Activated CD8-positive, alpha-beta T cell treated with anti-CD3 and anti-CD28 coated beads, Interleukin-2, amount 10 ng/mL, durations not matched to agents 7 days and 5 days (primary cell): ENCODE measurements at regions of chr10 and their contacts with region 1.

Region 1: GRCh38 chr10:79195091-79195923 is 126.5 kb downstream of the ZMIZ1 start:
- DNase-seq: peak; percentile 85
- ATAC-seq: peak; percentile 91
- H3K4me3 Mint-ChIP-seq: no peak overlapping the region
- H3K27ac Mint-ChIP-seq: no peak overlapping the region
- H3K4me1 Mint-ChIP-seq: no peaks in the 10 kb centered on the region
- H3K27me3 Mint-ChIP-seq: no peaks in the 10 kb centered on the region

Region 2: DNA sequence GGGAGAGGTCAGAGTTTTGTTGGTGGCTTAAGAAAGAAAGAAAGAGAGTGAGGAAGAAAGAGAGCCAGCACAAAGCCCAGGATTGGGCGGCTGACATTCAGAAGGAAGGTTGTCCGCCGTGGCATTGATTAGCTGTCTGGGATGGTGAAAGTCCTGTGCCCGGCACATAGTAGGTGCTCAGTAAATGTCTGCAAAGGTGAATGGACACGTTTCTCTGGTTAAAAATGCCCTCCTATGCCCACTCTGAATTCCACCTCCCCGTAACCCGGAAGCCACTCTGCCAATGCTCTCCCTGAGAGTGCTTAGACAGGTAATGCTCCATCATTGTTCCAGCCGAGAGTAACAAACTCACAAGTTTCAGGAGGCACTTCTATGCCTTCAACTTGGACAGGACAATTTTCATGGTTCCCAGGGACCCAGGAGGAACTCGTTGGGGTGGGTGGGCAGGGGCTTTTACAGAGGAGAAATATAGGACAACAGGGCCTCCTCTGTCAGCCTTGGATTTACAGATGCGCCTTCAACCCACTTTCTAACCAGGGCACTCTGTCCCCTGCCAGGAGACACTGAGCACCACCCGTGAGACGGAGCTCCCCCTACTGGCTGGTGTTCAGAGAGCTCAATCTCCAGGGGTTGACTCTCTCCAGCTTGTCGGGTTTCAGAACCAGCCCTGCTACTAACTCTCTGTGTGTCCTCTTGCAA is 538.0 kb before region 1 on chr10:
- CTCF ChIA-PET with region 1: interaction called, 14 read pairs
- POLR2A ChIA-PET with region 1: no interaction called
- DNase-seq: peak; percentile 81
- ATAC-seq: peak; percentile 82
- H3K4me3 Mint-ChIP-seq: no peak overlapping the region
- H3K27ac Mint-ChIP-seq: no peak overlapping the region
- H3K4me1 Mint-ChIP-seq: no peaks in the 10 kb centered on the region
- H3K27me3 Mint-ChIP-seq: peaks cover 12% of the 10 kb centered on the region

Region 3: DNA sequence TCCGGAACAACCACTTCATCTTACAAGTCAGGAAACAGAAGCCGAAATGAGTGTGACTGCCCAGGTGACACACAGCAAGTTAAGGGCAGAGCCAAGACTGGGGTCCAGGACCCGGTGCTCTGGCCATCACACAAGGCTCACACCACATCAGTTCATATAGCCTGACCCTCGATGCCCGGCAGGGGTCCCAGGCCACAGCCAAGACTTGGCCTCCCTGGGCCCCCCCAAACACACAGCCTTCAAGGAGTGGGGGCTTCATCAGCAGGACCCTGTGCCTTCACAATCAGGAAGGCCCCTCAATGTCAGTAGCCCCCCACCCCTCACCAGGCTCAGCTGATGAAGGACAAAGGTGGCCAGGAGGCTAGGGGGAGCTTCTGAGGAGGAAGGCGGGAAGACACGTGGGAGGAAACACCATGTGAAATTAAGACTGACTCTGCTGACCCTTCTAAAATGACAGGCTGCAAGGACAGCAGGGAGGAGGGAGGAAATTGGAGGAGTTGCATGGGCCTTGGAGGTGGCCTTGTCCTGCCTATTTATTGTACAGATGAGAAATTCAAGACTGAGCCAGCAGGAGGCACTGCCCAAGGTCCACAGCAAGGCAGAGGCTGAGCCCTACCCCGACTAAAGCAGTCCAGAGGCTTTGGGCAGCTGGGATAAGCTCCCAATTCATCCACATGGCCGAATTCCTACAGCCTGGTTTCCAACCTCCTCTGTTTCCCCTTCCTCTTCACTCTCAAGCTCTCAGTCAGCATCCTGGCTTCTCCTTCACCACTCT is 342.7 kb before region 1 on chr10:
- CTCF ChIA-PET with region 1: interaction called, 23 read pairs
- POLR2A ChIA-PET with region 1: no interaction called
- DNase-seq: peak; percentile 33
- ATAC-seq: no peak
- H3K4me3 Mint-ChIP-seq: no peak overlapping the region
- H3K27ac Mint-ChIP-seq: no peak overlapping the region
- H3K4me1 Mint-ChIP-seq: no peaks in the 10 kb centered on the region
- H3K27me3 Mint-ChIP-seq: no peaks in the 10 kb centered on the region

Region 4: GRCh38 chr10:79067241-79068202 is 127.8 kb before region 1 on chr10:
- CTCF ChIA-PET with region 1: interaction called, 17 read pairs
- POLR2A ChIA-PET with region 1: interaction called, 3 read pairs
- DNase-seq: peak; percentile 84
- ATAC-seq: peak; percentile 24
- H3K4me3 Mint-ChIP-seq: peak overlapping the region; percentile 79
- H3K27ac Mint-ChIP-seq: peak overlapping the region; percentile 4
- H3K4me1 Mint-ChIP-seq: peaks cover 56% of the 10 kb centered on the region
- H3K27me3 Mint-ChIP-seq: peaks cover 14% of the 10 kb centered on the region

Region 5: DNA sequence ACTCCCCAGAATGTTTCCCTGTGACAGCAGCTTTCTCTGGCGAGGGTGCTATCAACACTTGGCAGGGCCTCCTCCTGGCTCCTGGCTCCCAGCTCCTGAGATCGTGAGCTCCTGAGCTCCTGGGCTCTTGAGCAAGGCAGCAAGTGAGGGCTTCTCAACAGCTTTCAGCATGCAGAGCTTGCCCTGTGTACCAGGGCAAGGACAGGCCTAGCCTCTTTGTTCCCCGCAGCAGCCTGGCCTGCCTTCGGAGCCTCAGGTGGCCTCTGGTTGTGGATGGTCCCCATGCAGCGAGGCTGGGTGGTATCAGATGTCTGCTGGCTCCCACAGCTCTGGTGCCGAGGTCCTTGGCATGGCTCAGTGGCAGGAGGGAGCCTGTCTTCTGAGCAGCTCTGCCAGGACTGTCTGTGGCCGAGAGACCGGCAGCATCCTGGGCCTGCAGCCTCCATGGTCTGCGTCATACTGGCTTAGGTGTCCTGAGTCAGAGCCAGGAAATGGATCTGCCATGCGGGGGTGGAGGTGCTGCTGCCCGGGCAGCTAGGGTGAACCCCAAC is 82.4 kb before region 1 on chr10:
- CTCF ChIA-PET with region 1: interaction called, 11 read pairs
- POLR2A ChIA-PET with region 1: no interaction called
- DNase-seq: no peak
- ATAC-seq: no peak
- H3K4me3 Mint-ChIP-seq: no peak overlapping the region
- H3K27ac Mint-ChIP-seq: no peak overlapping the region
- H3K4me1 Mint-ChIP-seq: peaks cover 26% of the 10 kb centered on the region
- H3K27me3 Mint-ChIP-seq: no peaks in the 10 kb centered on the region

Region 6: DNA sequence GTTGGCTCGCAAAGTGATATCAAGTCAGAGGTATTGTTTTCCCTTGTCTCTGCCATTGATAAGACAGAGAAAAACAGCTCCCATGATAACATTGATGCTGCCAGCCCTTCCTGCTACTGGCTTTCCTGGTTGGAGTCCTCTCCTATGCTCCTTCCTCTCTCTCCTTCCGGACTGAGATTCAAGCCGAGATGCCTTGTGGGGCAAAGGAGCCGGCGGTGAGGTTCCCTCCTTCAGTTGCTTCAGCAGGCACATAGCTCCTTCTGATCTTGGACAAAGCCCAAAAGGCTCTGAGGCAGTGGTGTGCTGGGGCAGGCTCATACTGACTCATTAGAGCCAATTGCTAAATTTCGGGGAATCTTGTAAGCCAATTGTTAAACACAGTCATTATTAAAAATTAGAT is 259.0 kb after region 1 on chr10:
- CTCF ChIA-PET with region 1: no interaction called
- POLR2A ChIA-PET with region 1: no interaction called
- DNase-seq: no peak
- ATAC-seq: no peak
- H3K4me3 Mint-ChIP-seq: no peak overlapping the region
- H3K27ac Mint-ChIP-seq: no peak overlapping the region
- H3K4me1 Mint-ChIP-seq: no peaks in the 10 kb centered on the region
- H3K27me3 Mint-ChIP-seq: peaks cover 24% of the 10 kb centered on the region